ENCODE measurements at regions of chr15 and their contacts with region 1.

Region 1: GRCh38 chr15:74373731-74374647 is 6.5 kb upstream of the CYP11A1 start:
- DNase-seq: peak; percentile 81 to 93 (median 87)
- H3K4me3 ChIP-seq: peak overlapping the region; percentile 48 to 91 (median 72)
- H3K27ac ChIP-seq: peak overlapping the region in 12 of 59 donors; percentile 6 to 69 (median 32)
- H3K27me3 ChIP-seq: no peaks in the 10 kb centered on the region
- CTCF ChIP-seq: peak; percentile 36 to 97 (median 90)

Region 2: GRCh38 chr15:74196179-74196590 is 177.8 kb before region 1 on chr15:
- intact Hi-C with region 1: no loop called
- DNase-seq: peak in 1 of 10 donors; percentile 24
- H3K4me3 ChIP-seq: no peak overlapping the region
- H3K27ac ChIP-seq: no peak overlapping the region
- H3K27me3 ChIP-seq: no peaks in the 10 kb centered on the region
- CTCF ChIP-seq: no peak

Region 3: DNA sequence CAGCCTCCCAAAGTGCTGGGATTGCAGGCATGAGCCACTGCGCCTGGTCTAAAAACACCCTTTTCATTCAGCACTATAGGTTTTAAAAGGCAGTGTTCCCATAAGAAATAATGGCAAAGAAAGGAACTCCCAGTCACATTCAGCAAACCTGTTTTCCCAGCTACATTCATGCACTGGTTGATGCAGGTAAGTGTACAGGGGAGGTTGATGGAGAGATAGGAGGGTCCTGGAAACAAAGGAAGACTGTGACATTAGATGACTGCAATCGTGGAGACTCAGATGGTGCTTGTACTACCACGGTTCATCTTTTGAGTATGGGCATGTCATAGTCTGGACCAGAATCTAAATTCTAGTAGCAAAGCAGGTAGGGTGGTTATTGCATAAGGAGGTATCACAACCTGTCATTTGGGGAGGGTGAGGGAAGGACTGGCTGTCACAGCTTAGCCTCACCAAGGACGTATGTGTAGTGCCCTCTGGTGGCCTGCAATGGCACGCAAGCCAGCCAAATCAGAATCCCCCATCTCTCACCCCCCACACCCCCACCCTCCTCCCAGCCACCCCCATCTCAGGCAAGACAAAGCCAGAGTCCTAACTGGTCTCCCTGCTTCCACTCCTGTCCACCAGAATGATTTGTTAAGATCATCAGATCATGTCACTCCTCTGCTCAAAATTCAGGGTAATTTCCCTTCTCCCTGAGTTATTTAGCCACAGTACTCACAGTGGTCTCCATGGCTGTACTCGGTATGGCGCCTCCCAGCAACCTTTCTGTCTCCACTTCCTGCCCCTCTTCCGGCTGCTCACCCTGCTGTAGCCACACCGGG is 115.7 kb after region 1 on chr15:
- intact Hi-C with region 1: loop called (anchors 2 kb)
- DNase-seq: peak in 8 of 10 donors; percentile 34 to 67 (median 50)
- H3K4me3 ChIP-seq: no peak overlapping the region
- H3K27ac ChIP-seq: no peak overlapping the region
- H3K27me3 ChIP-seq: no peaks in the 10 kb centered on the region
- CTCF ChIP-seq: peak; percentile 40 to 81 (median 68)

Region 4: GRCh38 chr15:74620636-74621545 is 246.9 kb after region 1 on chr15:
- intact Hi-C with region 1: loop called in 1 of 2 experiments (anchors 5 kb)
- DNase-seq: peak; percentile 50 to 84 (median 74)
- H3K4me3 ChIP-seq: peak overlapping the region in 26 of 59 donors; percentile 1 to 43 (median 21)
- H3K27ac ChIP-seq: peak overlapping the region in 37 of 59 donors; percentile 3 to 76 (median 54)
- H3K27me3 ChIP-seq: no peaks in the 10 kb centered on the region
- CTCF ChIP-seq: peak; percentile 37 to 90 (median 79)

Region 5: GRCh38 chr15:74768771-74769342 is 394.9 kb after region 1 on chr15:
- intact Hi-C with region 1: loop called (anchors 2 to 10 kb)
- DNase-seq: peak in 9 of 10 donors; percentile 55 to 79 (median 73)
- H3K4me3 ChIP-seq: peak overlapping the region in 38 of 59 donors; percentile 2 to 53 (median 28)
- H3K27ac ChIP-seq: no peak overlapping the region
- H3K27me3 ChIP-seq: no peaks in the 10 kb centered on the region
- CTCF ChIP-seq: peak; percentile 70 to 97 (median 88)

Region 6: GRCh38 chr15:74956648-74957300 is 582.8 kb after region 1 on chr15 and contains the start of gene RPP25:
- intact Hi-C with region 1: loop called (anchors 5 to 10 kb)
- DNase-seq: peak; percentile 42 to 82 (median 59)
- H3K4me3 ChIP-seq: peak within 1 kb of the TSS; percentile 49 to 81 (median 67)
- H3K27ac ChIP-seq: peak within 1 kb of the TSS in 52 of 59 donors; percentile 10 to 84 (median 65)
- H3K27me3 ChIP-seq: peaks cover 0 to 20% (median 3%) of the 10 kb centered on the region in 45 donors
- CTCF ChIP-seq: no peak
- total RNA-seq, gene RPP25: 5.0 to 16.7 (median 8.5) TPM